Heart left ventricle (tissue), 16 donors: ENCODE measurements at regions of chr18 and their contacts with region 1.

Region 1: GRCh38 chr18:61551586-61551985 is 218.4 kb downstream of the CDH20 start:
- DNase-seq: peak in 2 of 5 donors; percentile 47 to 56
- ATAC-seq: peak; percentile 78 to 85 (median 80)
- H3K4me3 ChIP-seq: no peak overlapping the region
- H3K27ac ChIP-seq: no peak overlapping the region
- H3K4me1 ChIP-seq: peaks cover 0 to 8% (median 0%) of the 10 kb centered on the region in 12 donors
- H3K27me3 ChIP-seq: no peaks in the 10 kb centered on the region
- CTCF ChIP-seq: peak; percentile 72 to 92 (median 88)
- POLR2A ChIP-seq: no peak

Region 2: DNA sequence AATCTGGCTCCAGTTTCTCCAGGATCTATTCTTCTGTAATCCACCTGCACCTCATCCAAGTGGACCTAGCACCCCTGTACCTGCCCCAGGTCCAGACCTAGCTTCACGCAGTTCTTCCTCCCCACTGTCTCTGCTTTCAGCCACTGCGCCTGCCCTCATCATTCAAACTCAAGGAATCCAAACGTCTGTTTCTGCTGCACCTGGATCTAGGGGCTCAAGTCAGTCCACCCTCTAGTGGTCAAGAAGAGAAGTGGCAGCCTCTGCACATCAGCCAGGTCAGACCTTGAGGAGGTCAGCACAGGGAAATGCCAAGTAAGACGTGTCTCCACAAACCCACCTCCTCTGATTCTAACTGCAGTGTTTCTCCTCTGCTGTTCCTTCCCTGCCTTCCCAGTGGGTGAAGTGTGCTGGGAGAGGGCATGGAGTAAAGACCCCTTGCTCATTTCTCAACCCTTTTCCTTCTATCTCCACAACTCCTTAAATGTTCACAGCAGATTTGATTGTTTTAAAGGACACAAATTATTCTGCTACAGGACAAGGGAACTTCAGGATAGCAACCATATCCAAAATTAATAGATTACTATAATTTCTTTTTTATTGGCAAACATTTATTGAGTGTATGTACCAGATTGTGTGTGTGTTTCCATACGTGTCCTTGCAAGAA is 349.9 kb after region 1 on chr18:
- intact Hi-C with region 1: loop called in 5 of 10 experiments (anchors 1 to 10 kb)
- DNase-seq: peak in 3 of 5 donors; percentile 27 to 47 (median 30)
- ATAC-seq: peak; percentile 62 to 79 (median 72)
- H3K4me3 ChIP-seq: no peak overlapping the region
- H3K27ac ChIP-seq: no peak overlapping the region
- H3K4me1 ChIP-seq: peaks cover 0 to 7% (median 0%) of the 10 kb centered on the region in 12 donors
- H3K27me3 ChIP-seq: peaks cover 0 to 13% (median 0%) of the 10 kb centered on the region in 9 donors
- CTCF ChIP-seq: peak; percentile 81 to 93 (median 90)
- POLR2A ChIP-seq: no peak

Region 3: DNA sequence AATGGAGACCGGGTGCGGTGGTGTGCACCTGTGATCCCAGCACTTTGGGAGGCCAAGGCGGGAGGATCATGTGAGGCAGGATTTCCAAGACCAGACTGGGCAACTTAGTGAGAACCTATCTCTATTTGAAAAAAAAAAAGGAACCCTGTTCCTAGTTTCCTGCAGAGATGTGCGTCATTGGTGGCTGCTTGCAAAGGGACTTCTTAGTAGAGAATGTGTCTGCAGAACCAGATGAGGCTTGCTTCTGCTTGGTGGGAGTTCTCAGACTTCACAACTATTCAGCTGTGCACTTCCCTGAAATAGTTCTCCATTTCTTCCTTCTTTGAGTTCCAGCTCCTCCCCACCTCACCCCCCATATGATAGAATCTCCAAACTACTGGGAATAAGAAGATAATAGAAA is 993.5 kb after region 1 on chr18:
- intact Hi-C with region 1: no loop called
- DNase-seq: peak in 1 of 5 donors; percentile 29
- ATAC-seq: peak in 3 of 4 donors; percentile 42 to 71 (median 62)
- H3K4me3 ChIP-seq: no peak overlapping the region
- H3K27ac ChIP-seq: peak overlapping the region in 1 of 12 donors; percentile 32
- H3K4me1 ChIP-seq: peaks cover 0 to 17% (median 1%) of the 10 kb centered on the region in 12 donors
- H3K27me3 ChIP-seq: no peaks in the 10 kb centered on the region
- CTCF ChIP-seq: no peak
- POLR2A ChIP-seq: no peak